ENCODE measurements at regions of chr3 and their contacts with region 1.

Region 1: GRCh38 chr3:50542177-50543034 is 25.1 kb downstream of the C3orf18 start:
- DNase-seq: peak; percentile 78
- ATAC-seq: peak; percentile 78
- H3K4me3 Mint-ChIP-seq: no peak overlapping the region
- H3K27ac Mint-ChIP-seq: no peak overlapping the region
- H3K4me1 Mint-ChIP-seq: no peaks in the 10 kb centered on the region
- H3K27me3 Mint-ChIP-seq: no peaks in the 10 kb centered on the region

Region 2: GRCh38 chr3:50163572-50164455 is 378.6 kb before region 1 on chr3:
- CTCF ChIA-PET with region 1: no interaction called
- POLR2A ChIA-PET with region 1: no interaction called
- intact Hi-C with region 1: no loop called
- DNase-seq: no peak
- ATAC-seq: no peak
- H3K4me3 Mint-ChIP-seq: no peak overlapping the region
- H3K27ac Mint-ChIP-seq: no peak overlapping the region
- H3K4me1 Mint-ChIP-seq: no peaks in the 10 kb centered on the region
- H3K27me3 Mint-ChIP-seq: no peaks in the 10 kb centered on the region

Region 3: DNA sequence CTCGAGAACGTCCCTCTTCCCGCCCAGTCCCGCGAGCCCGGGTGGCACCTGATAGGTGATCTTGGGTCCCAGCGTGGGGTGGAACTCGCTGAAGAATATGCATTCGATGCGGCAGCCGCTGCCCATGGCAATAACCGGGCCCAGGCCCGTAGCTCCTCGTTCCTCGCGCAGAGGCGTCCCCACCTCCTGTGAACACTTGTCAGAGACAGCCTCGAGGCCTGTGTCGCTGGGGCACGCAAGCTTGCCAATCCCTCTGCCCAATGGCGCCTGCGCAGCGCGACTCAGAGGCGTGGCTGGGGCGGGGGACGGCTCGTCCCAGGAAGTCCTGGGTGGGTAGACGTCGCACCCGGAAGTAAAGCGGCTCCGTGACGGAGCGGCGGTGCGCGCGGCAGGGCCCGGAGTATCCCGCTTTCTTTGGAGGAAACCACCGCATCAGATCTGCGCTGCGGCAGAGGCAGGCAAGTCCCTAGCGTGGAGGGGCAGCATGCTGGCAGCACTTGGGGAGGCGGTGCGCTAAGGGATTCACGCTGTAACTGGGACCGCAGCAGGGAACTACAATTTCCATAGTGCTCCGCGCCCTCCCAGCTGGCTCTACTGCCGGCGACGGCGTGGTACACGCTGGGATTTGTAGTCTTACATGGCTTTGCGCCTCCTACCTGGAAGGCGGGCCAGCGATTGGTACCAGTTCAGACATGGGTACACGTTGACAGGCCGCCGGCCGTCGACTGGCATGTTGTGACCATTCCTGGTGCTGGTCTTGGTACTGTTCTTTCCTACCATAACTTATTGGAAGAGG is 191.7 kb before region 1 on chr3 and contains the starts of genes CYB561D2 and NPRL2:
- CTCF ChIA-PET with region 1: interaction called, 8 read pairs
- POLR2A ChIA-PET with region 1: no interaction called
- intact Hi-C with region 1: loop called (anchors 1 to 2 kb)
- DNase-seq: peak; percentile 99
- ATAC-seq: peak; percentile 90
- H3K4me3 Mint-ChIP-seq: peak within 1 kb of the TSS; percentile 90
- H3K27ac Mint-ChIP-seq: peak within 1 kb of the TSS; percentile 97
- H3K4me1 Mint-ChIP-seq: peaks cover 55% of the 10 kb centered on the region
- H3K27me3 Mint-ChIP-seq: no peaks in the 10 kb centered on the region
- total RNA-seq, gene CYB561D2: 10.3 to 14.3 TPM
- total RNA-seq, gene NPRL2: 42.5 to 43.0 TPM

Region 4: DNA sequence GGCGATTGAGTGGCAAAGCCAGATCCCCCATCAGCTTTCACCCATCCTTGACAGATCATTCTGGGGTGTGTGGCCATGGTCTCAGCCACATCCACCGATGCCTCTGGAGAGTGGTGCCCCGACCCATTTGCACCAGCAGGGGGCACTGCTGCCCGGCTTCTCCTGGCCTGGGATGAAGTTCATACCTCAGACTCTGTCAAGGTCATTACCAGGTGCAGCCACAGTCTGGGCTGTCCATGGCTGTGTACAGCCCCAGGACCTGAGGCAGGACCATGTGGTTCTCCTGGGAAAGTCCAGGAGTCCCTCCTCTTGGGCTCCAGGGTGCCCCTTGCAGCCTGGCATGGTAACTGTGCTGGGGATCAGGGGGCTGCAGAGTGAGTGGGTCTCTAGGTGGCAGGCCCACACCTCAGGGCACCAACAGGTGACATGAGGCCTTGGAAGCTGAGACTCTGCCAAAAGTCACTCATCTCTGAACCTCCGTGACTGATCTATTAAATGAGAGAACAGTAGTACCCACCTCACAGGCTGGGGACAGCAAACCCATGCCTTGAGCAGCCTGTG is 106.2 kb before region 1 on chr3:
- CTCF ChIA-PET with region 1: interaction called, 44 read pairs
- POLR2A ChIA-PET with region 1: no interaction called
- intact Hi-C with region 1: loop called (anchors 1 kb)
- DNase-seq: peak; percentile 89
- ATAC-seq: peak; percentile 98
- H3K4me3 Mint-ChIP-seq: no peak overlapping the region
- H3K27ac Mint-ChIP-seq: no peak overlapping the region
- H3K4me1 Mint-ChIP-seq: no peaks in the 10 kb centered on the region
- H3K27me3 Mint-ChIP-seq: peaks cover 3% of the 10 kb centered on the region

Region 5: DNA sequence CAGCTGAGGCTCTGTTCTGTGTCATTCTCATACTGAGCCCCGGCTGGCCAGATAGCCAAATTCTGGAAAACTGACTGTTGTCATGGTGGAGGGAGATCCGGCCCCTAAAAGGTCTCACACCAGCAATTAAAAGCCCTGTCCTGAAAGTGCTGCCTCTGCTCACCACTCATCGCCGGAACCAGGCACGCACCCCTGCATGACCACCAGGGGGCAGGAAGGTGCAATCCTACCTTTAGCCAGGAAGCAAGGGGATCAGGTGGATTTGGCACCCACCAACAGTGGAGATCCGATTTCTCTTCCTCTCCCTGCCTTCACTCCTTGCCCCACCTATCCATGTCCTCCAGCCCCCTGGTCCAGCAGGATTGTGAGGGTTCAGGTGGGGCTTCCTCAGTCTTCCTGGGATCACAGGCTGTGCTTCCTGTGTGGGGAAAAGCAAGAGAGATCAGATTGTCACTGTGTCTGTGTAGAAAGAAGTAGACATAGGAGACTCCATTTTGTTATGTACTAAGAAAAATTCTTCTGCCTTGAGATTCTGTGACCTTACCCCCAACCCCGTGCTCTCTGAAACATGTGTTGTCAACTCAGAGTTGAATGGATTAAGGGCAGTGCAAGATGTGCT is 22.8 kb before region 1 on chr3:
- CTCF ChIA-PET with region 1: interaction called, 19 read pairs
- POLR2A ChIA-PET with region 1: no interaction called
- intact Hi-C with region 1: loop called (anchors 1 kb)
- DNase-seq: peak; percentile 88
- ATAC-seq: peak; percentile 95
- H3K4me3 Mint-ChIP-seq: no peak overlapping the region
- H3K27ac Mint-ChIP-seq: no peak overlapping the region
- H3K4me1 Mint-ChIP-seq: peaks cover 4% of the 10 kb centered on the region
- H3K27me3 Mint-ChIP-seq: peaks cover 4% of the 10 kb centered on the region

Region 6: DNA sequence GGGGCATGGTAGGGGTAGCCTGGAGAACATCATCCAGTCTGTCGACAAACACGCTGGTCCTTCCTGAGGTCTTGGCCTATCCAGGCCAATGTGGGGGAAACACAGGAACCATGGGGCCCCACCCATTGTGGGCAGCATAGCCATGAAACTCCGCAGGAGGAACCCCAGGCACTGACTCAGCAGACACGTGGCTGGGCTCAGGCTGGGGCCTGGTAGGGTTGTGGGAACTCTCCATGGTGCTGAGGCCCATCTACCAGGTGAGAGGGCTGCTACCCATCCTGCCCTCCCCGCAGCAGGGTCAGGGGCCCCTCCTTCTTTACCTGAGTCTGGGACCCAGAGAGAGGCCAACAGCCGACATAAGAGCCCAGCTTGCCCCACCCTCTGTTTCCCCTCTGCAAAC is 16.4 kb before region 1 on chr3:
- CTCF ChIA-PET with region 1: interaction called, 15 read pairs
- POLR2A ChIA-PET with region 1: no interaction called
- intact Hi-C with region 1: no loop called
- DNase-seq: peak; percentile 89
- ATAC-seq: peak; percentile 97
- H3K4me3 Mint-ChIP-seq: no peak overlapping the region
- H3K27ac Mint-ChIP-seq: no peak overlapping the region
- H3K4me1 Mint-ChIP-seq: peaks cover 4% of the 10 kb centered on the region
- H3K27me3 Mint-ChIP-seq: peaks cover 15% of the 10 kb centered on the region